Heart right ventricle (tissue), 16 donors: ENCODE measurements at regions of chr3 and their contacts with region 1.

Region 1: DNA sequence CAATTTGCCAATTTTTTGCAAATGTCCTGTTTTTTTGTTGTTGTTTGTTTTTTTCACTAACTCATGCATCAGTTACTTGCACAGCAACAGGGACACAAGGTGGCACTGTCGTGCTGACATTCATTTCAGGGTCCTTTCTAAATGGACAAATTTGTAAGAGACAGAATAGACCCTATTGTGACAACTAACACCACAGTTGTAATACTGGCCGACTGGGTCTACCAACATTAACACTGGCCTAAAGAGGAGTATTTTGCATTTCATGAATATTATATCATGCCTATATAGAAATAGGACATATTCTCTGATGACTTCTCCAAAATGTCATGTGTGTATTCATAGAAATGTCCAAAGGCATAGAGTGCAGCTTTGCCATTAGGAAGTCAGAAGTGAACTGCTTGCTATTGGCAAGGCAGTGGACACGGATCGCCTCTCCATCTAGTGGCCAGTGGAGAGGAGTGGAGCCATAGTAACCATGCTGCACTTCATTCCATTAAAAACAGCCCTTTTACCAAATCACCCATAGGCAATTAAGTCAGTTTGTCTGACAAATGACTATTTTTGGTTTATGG is 54.8 kb downstream of the ZBTB20 start:
- DNase-seq: peak; percentile 41 to 74
- ATAC-seq: peak; percentile 95 to 99 (median 98)
- H3K4me3 ChIP-seq: no peak overlapping the region
- H3K27ac ChIP-seq: peak overlapping the region in 6 of 10 donors; percentile 7 to 48 (median 34)
- H3K4me1 ChIP-seq: peaks cover 0 to 78% (median 41%) of the 10 kb centered on the region in 9 donors
- H3K27me3 ChIP-seq: no peaks in the 10 kb centered on the region
- CTCF ChIP-seq: peak; percentile 44 to 82 (median 70)

Region 2: DNA sequence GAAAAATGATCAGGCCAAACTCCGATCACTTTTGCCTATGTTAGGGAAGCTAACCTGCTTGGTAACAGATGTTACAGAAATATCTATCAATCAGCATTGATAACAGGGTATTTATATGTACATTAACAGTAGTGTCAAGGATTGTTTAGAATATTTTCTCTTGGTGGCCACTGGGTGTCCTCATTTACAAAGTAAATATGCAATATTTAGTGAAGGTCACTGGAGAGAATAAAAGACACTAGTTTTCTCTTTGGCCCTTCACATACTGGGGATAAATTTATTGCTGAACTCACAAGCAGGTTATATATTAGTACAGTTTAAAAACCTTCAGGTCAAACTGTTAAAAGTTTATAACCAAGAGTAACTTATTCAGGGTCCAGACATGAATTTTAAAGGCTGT is 729.5 kb before region 1 on chr3:
- intact Hi-C with region 1: loop called in 3 of 10 experiments (anchors 5 to 10 kb)
- DNase-seq: no peak
- ATAC-seq: peak in 7 of 8 donors; percentile 39 to 77 (median 56)
- H3K4me3 ChIP-seq: no peak overlapping the region
- H3K27ac ChIP-seq: peak overlapping the region; percentile 18 to 80 (median 56)
- H3K4me1 ChIP-seq: peaks cover 5 to 55% (median 34%) of the 10 kb centered on the region in 9 donors
- H3K27me3 ChIP-seq: no peaks in the 10 kb centered on the region
- CTCF ChIP-seq: peak; percentile 14 to 68 (median 51)

Region 3: DNA sequence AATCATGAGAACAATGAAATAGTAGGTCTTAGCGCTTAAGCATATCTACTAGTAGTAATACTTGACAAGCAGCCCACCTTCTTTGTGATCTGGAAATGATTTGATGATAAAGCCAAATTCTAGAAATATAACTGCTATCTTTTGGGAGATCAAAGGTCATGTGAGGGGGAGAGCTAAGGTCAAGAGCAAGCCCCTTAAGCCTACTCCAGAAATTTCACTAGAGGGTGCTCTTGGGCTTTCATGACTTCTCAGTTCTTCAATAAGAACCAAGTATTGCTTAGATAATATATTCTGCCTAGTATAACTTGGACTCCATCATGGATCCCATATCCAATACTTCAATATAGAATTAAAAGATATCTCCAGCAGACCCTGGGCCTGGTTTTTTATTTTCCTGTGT is 264.8 kb before region 1 on chr3:
- intact Hi-C with region 1: loop called in 5 of 10 experiments (anchors 2 to 10 kb)
- DNase-seq: peak in 1 of 2 donors; percentile 24
- ATAC-seq: peak in 7 of 8 donors; percentile 62 to 81 (median 76)
- H3K4me3 ChIP-seq: no peak overlapping the region
- H3K27ac ChIP-seq: no peak overlapping the region
- H3K4me1 ChIP-seq: peaks cover 0 to 7% (median 0%) of the 10 kb centered on the region in 9 donors
- H3K27me3 ChIP-seq: no peaks in the 10 kb centered on the region
- CTCF ChIP-seq: peak in 8 of 9 donors; percentile 47 to 82 (median 73)

Region 4: DNA sequence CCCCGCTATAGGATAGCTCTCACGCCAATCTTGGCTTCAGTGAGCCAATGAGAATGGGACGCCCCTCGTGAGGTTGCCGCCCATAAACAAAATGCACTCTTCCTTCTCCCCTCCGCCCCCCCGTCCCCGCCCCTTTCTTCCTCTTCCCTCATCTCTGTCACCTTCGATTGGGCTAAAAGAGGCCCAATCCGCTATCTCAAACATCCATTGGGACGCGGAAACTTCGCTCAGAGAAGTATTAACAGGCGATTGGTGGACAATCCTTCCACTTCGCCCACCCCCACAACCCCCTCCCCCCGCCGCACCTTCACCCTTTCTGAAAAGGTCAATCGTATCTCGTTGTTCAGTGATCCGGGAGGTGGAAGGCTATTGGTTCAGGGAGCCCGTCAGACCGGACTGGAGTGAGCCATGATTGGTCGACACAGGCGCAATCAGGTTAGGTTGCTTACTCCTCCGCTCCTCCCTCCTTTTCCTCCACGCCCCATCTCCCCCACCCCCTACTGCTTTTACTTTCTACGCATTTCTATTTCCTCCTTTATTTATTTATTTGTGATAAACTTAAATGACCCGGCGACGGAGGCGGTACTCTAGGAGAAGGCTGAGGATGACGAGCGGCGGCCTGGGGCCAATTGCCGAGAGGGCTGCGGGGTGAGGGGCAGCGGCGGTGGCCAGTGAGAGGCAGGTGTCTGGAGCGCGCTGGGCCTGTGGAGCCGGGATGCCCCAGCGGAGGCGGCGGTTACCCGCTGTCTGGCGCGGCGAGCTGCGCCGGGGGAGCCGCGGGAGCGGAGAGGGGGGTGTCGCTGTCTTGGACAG is 55.2 kb after region 1 on chr3:
- intact Hi-C with region 1: loop called in 3 of 10 experiments (anchors 2 to 5 kb)
- DNase-seq: peak; percentile 98 to 100
- ATAC-seq: peak; percentile 88 to 96 (median 93)
- H3K4me3 ChIP-seq: peak overlapping the region; percentile 61 to 94 (median 86)
- H3K27ac ChIP-seq: peak overlapping the region; percentile 94 to 99 (median 97)
- H3K4me1 ChIP-seq: peaks cover 0 to 26% (median 16%) of the 10 kb centered on the region in 9 donors
- H3K27me3 ChIP-seq: no peaks in the 10 kb centered on the region
- CTCF ChIP-seq: peak in 2 of 9 donors; percentile 17 to 22

Region 5: DNA sequence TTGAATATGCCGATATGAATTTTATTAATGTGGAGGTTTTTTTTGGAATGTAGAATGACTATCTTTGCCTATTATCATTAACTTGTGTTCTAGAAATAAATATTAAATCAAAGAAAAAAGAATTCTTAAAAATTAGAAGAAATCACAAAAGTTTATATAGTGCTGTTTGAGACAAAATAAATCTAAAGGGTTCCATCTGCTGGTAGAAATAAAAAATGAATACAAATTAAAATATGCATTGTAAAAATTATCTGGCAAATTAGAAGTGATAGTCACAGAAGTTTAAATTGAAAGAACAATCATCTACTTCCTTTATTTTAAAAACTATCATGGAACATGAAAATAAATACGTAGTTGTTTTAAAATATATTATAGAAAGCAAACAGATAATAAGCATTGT is 77.5 kb after region 1 on chr3:
- intact Hi-C with region 1: loop called in 5 of 10 experiments (anchors 2 to 5 kb)
- DNase-seq: no peak
- ATAC-seq: no peak
- H3K4me3 ChIP-seq: no peak overlapping the region
- H3K27ac ChIP-seq: no peak overlapping the region
- H3K4me1 ChIP-seq: no peaks in the 10 kb centered on the region
- H3K27me3 ChIP-seq: no peaks in the 10 kb centered on the region
- CTCF ChIP-seq: peak in 8 of 9 donors; percentile 34 to 66 (median 49)